ENCODE measurements at regions of chr2 and their contacts with region 1.

Region 1: GRCh38 chr2:106899786-106900530 is 14.0 kb upstream of the ST6GAL2 start:
- DNase-seq: no peak
- H3K4me3 ChIP-seq: no peak overlapping the region
- H3K27ac ChIP-seq: no peak overlapping the region
- H3K4me1 ChIP-seq: no peaks in the 10 kb centered on the region
- H3K27me3 ChIP-seq: no peaks in the 10 kb centered on the region
- CTCF ChIP-seq: no peak
- POLR2A ChIP-seq: no peak

Region 2: DNA sequence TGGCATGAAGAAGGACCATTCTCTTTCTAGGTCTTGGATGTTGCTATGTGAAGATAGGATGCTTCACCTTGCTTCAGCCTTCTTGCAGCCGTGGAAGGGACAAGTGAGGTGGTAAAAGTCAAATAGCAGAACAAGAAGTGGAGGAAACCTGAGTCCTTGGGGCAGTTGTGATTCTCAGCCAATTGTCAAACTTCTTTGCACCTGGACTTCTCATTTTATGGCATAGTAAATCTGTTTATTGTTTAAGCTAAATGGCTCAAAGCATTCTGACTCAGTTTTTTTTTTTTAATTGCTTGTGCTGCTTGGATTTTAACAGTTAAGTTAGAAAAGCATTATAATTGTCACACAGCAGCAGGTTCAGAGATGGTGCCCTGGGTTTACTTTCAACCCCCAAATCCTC is 19.1 kb after region 1 on chr2:
- intact Hi-C with region 1: loop called (anchors 2 kb)
- DNase-seq: no peak
- H3K4me3 ChIP-seq: no peak overlapping the region
- H3K27ac ChIP-seq: no peak overlapping the region
- H3K4me1 ChIP-seq: no peaks in the 10 kb centered on the region
- H3K27me3 ChIP-seq: no peaks in the 10 kb centered on the region
- CTCF ChIP-seq: no peak
- POLR2A ChIP-seq: no peak